ENCODE measurements at regions of chr1 and their contacts with region 1.

Region 1: GRCh38 chr1:99669821-99670220 is 23.9 kb downstream of the PALMD start:
- DNase-seq: no peak
- H3K4me3 ChIP-seq: no peak overlapping the region
- H3K27ac ChIP-seq: no peak overlapping the region
- H3K4me1 ChIP-seq: no peaks in the 10 kb centered on the region
- H3K27me3 ChIP-seq: no peaks in the 10 kb centered on the region
- CTCF ChIP-seq: no peak

Region 2: DNA sequence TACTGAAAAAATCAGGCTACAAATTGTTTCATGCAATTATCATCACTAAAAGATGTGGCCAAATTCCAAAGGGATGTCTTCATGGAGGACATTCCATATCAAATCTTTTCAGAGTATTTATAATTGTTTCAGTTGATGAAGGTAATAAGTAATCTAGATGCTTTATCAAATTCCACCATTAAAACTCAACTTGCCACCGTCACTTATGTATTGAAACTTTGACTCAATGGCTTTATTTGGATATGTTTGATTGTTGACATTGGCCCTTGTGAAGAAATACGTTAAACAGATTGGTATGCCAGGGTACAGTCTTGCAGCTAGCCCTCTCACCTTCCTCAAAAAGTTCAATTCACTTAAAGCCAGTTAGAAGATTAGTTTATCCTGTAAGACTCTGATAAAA is 56.1 kb before region 1 on chr1:
- CTCF ChIA-PET with region 1: no interaction called
- dilution Hi-C with region 1: loop called (anchors 5 kb)
- in situ Hi-C with region 1: no loop called
- intact Hi-C with region 1: no loop called
- DNase-seq: no peak
- H3K4me3 ChIP-seq: no peak overlapping the region
- H3K27ac ChIP-seq: no peak overlapping the region
- H3K4me1 ChIP-seq: no peaks in the 10 kb centered on the region
- H3K27me3 ChIP-seq: no peaks in the 10 kb centered on the region
- CTCF ChIP-seq: no peak

Region 3: DNA sequence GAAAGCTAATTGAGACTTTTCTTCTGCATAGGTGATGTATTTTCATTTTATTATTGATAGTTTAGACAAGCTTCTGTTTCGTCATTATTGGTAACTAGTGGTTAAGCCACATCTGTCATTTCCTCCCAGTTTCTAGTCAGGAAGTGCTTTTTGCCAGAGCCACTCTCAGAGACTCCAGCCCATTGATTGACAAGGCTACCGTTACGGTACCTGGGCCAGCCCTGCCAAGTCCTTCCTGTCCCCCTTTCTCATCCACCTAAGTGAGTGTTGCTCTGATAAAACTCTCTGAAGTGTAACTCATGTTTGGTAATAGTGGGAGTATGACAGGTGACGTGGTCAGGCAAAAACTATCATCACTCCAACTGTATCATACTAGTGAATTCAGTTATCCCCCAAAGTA is 150.7 kb after region 1 on chr1:
- CTCF ChIA-PET with region 1: no interaction called
- dilution Hi-C with region 1: no loop called
- in situ Hi-C with region 1: no loop called
- intact Hi-C with region 1: no loop called
- DNase-seq: no peak
- H3K4me3 ChIP-seq: no peak overlapping the region
- H3K27ac ChIP-seq: no peak overlapping the region
- H3K4me1 ChIP-seq: no peaks in the 10 kb centered on the region
- H3K27me3 ChIP-seq: no peaks in the 10 kb centered on the region
- CTCF ChIP-seq: no peak

Measured in mammary epithelial cell (primary cell).